GM10248 (cell line): ENCODE measurements at regions of chr1 and their contacts with region 1.

Region 1: GRCh38 chr1:201709564-201710295 is 119.2 kb upstream of the IPO9 start:
- DNase-seq: peak; percentile 76
- CTCF ChIP-seq: peak; percentile 92

Region 2: DNA sequence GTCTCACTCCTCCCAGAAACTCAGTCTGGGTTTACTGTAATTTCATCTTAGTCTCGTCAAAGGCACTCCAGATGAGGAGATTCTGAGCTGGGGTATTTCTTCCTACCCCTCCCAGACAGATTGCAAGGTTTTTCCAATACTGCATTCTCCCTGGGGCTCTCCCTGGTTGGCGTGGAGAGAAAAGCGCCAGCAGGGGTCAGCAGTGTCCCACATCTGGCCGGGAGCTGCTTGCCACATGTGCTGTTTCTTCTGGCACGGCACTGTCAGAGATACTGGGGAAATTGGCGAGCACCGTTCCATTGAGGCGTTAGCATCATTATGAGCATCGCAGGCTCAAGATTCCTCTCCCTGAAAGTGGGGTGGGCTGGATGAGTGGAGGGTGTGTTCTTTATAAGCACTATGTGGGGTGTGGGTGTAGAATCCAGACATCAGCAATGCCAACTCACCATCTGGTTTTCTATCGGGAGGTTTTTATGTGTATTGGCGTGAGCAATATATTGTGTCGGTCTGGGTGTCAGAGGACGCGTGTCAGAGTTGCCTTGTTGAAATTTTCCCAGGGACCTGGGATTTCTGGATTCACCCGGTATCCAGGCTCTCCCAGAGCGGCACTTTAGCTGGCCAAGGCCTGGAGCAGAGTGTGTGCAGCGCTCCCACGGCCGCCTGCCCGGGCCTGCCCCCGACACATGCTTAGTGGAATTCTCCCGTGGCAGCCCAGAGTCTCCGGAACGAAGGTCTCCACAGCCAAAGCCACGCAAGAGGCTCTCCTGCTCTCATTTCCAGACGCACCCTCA is 178.8 kb before region 1 on chr1:
- CTCF ChIA-PET with region 1: interaction called, 36 read pairs
- POLR2A ChIA-PET with region 1: no interaction called
- DNase-seq: peak; percentile 73
- CTCF ChIP-seq: peak; percentile 67

Region 3: GRCh38 chr1:201678264-201679101 is 31.2 kb before region 1 on chr1:
- CTCF ChIA-PET with region 1: interaction called, 10 read pairs
- POLR2A ChIA-PET with region 1: no interaction called
- DNase-seq: no peak
- CTCF ChIP-seq: no peak

Region 4: GRCh38 chr1:201696217-201696761 is 13.4 kb before region 1 on chr1:
- CTCF ChIA-PET with region 1: interaction called, 28 read pairs
- POLR2A ChIA-PET with region 1: no interaction called
- DNase-seq: no peak
- CTCF ChIP-seq: no peak

Region 5: GRCh38 chr1:201719812-201720521 is 10.2 kb after region 1 on chr1:
- CTCF ChIA-PET with region 1: interaction called, 101 read pairs
- POLR2A ChIA-PET with region 1: no interaction called
- DNase-seq: no peak
- CTCF ChIP-seq: no peak

Region 6: DNA sequence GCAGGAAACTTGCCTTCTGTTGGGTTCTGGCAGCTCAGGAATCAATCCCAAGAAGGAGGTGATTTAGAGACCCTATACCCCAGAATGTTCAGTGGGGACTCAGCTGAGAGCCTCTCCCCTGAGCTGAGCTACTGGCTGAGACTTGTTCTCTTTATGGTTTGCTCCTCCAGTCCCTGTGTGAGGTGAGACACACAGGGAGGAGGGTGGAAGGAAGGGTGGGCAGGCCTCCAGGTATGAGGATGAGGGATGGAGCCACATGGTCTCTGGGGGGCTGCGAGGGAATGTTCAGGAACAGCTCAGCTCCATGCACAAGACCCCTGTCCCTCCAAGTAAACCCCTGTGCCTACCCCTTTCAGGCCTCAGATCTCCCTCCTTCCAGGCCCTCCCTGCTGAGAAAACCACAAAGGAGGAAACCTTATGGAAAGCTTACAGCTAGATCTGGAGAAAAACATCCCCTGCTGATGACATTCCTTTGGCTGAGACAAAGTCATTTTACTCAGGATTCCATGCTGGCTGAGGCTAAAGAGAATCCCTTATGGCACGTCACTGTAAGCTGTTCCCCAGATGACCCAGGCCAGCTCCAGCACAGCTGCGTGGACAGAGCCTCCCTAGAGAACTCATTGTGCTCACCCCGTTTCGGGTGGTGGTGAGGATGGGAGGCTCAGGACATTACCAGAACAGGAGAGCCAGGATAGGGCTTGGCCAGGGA is 27.8 kb after region 1 on chr1:
- CTCF ChIA-PET with region 1: interaction called, 11 read pairs
- POLR2A ChIA-PET with region 1: no interaction called
- DNase-seq: no peak
- CTCF ChIP-seq: no peak

Region 7: GRCh38 chr1:201792534-201793305 is 83.0 kb after region 1 on chr1:
- CTCF ChIA-PET with region 1: interaction called, 101 read pairs
- POLR2A ChIA-PET with region 1: no interaction called
- DNase-seq: peak; percentile 82
- CTCF ChIP-seq: peak; percentile 95